Vagina (tissue), 2 donors: ENCODE measurements at regions of chr2 and their contacts with region 1.

Region 1: GRCh38 chr2:233411162-233411561 is 56.9 kb downstream of the DGKD start:
- DNase-seq: no peak
- H3K4me3 ChIP-seq: no peak overlapping the region
- H3K27ac ChIP-seq: no peak overlapping the region
- H3K4me1 ChIP-seq: peaks cover 13% of the 10 kb centered on the region
- H3K27me3 ChIP-seq: no peaks in the 10 kb centered on the region
- CTCF ChIP-seq: no peak
- POLR2A ChIP-seq: no peak

Region 2: DNA sequence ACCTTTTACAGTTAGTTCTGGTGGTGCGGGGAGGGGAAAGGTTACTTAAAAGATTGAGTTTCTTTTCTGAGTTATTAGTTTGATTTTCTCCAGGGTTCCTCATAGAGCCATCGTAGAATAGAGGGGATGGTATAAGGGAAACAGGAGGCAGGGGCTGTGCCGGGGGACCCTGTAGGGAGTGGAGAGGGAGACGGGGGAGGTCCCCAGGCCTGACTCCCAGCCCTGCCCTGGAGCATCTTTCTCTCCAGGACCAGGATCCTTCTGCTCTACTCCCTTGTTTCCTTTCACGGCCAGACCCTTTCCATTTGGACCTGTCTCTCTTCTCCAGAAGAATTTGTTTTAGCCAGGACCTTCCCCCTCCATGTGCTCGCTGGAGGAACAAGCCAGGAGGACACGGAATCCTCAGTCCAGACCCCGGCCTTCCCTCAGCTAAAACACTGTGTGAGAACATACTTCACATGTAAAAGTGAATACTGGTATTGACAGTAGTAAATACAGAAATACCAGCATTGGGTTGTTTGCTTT is 21.5 kb before region 1 on chr2:
- intact Hi-C with region 1: loop called (anchors 1 kb)
- DNase-seq: peak in 1 of 2 donors; percentile 25
- H3K4me3 ChIP-seq: no peak overlapping the region
- H3K27ac ChIP-seq: no peak overlapping the region
- H3K4me1 ChIP-seq: peaks cover 32% of the 10 kb centered on the region
- H3K27me3 ChIP-seq: no peaks in the 10 kb centered on the region
- CTCF ChIP-seq: no peak
- POLR2A ChIP-seq: no peak